Activated CD4-positive, alpha-beta T cell treated with anti-CD3 and anti-CD28 coated beads for 36 hours (primary cell): ENCODE measurements at regions of chr9 and their contacts with region 1.

Region 1: DNA sequence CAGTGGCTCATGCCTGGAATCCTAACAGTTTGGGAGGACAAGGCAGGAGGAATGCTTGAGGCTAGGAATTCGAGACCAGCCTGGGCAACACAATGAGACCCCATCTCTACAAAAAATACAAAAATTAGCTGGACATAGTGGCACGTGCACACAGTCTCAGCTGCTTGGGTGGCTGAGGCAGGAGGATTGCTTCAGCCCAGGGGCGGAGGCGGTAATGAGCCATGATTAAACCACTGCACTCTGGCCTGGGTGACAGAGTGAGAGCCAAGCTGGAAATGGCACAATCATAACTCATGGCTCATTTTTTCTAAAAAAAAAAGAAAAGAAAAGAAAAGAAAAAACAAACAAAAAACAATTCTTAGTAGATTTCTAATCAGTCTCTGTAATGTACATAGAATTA is 446.2 kb downstream of the ELAVL2 start:
- DNase-seq: no peak
- ATAC-seq: no peak
- H3K4me3 Mint-ChIP-seq: no peak overlapping the region
- H3K27ac Mint-ChIP-seq: no peak overlapping the region
- H3K4me1 Mint-ChIP-seq: no peaks in the 10 kb centered on the region
- H3K27me3 Mint-ChIP-seq: no peaks in the 10 kb centered on the region

Region 2: DNA sequence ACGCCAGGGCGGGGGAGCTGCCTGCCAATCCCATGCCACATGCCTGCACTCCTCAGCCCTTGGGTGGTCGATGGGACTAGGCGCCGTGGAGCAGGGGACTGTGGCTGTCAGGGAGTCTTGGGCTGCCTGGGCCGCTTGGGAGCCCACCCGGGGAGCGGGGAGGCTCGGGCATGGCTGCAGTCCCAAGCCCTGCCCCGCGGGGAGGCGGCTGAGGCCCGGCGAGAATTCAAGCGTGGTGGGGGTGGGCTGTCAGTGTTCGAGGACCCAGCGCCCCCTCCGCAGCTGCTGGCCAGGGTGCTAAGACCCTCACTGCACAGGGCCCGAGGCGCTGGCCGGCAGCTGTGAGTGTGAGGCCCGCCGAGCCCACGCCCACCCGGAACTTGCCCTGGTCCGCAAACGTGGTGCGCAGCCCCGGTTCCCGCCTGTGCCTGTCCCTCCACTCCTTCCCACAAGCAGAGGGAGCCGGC is 1016.4 kb before region 1 on chr9:
- CTCF ChIA-PET with region 1: no interaction called
- POLR2A ChIA-PET with region 1: no interaction called
- intact Hi-C with region 1: no loop called
- DNase-seq: no peak
- ATAC-seq: no peak
- H3K4me3 Mint-ChIP-seq: no peak overlapping the region
- H3K27ac Mint-ChIP-seq: no peak overlapping the region
- H3K4me1 Mint-ChIP-seq: no peaks in the 10 kb centered on the region
- H3K27me3 Mint-ChIP-seq: no peaks in the 10 kb centered on the region

Region 3: GRCh38 chr9:23357651-23358050 is 22.2 kb before region 1 on chr9:
- CTCF ChIA-PET with region 1: interaction called, 3 read pairs
- POLR2A ChIA-PET with region 1: no interaction called
- intact Hi-C with region 1: loop called (anchors 1 kb)
- DNase-seq: no peak
- ATAC-seq: no peak
- H3K4me3 Mint-ChIP-seq: no peak overlapping the region
- H3K27ac Mint-ChIP-seq: no peak overlapping the region
- H3K4me1 Mint-ChIP-seq: no peaks in the 10 kb centered on the region
- H3K27me3 Mint-ChIP-seq: no peaks in the 10 kb centered on the region

Region 4: GRCh38 chr9:23451802-23452418 is 72.1 kb after region 1 on chr9:
- CTCF ChIA-PET with region 1: no interaction called
- POLR2A ChIA-PET with region 1: no interaction called
- intact Hi-C with region 1: no loop called
- DNase-seq: no peak
- ATAC-seq: no peak
- H3K4me3 Mint-ChIP-seq: no peak overlapping the region
- H3K27ac Mint-ChIP-seq: no peak overlapping the region
- H3K4me1 Mint-ChIP-seq: no peaks in the 10 kb centered on the region
- H3K27me3 Mint-ChIP-seq: no peaks in the 10 kb centered on the region